ENCODE measurements at regions of chr15 and their contacts with region 1.

Region 1: GRCh38 chr15:96783746-96784145 is 453.2 kb downstream of the NR2F2 start:
- DNase-seq: no peak
- H3K4me3 ChIP-seq: no peak overlapping the region
- H3K27ac ChIP-seq: no peak overlapping the region
- H3K4me1 ChIP-seq: no peaks in the 10 kb centered on the region
- H3K27me3 ChIP-seq: no peaks in the 10 kb centered on the region
- CTCF ChIP-seq: no peak

Region 2: GRCh38 chr15:95439922-95440376 is 1343.8 kb before region 1 on chr15:
- CTCF ChIA-PET with region 1: interaction called, 10 read pairs
- POLR2A ChIA-PET with region 1: no interaction called
- intact Hi-C with region 1: no loop called
- DNase-seq: no peak
- H3K4me3 ChIP-seq: no peak overlapping the region
- H3K27ac ChIP-seq: no peak overlapping the region
- H3K4me1 ChIP-seq: peaks cover 8% of the 10 kb centered on the region
- H3K27me3 ChIP-seq: no peaks in the 10 kb centered on the region
- CTCF ChIP-seq: no peak

Region 3: DNA sequence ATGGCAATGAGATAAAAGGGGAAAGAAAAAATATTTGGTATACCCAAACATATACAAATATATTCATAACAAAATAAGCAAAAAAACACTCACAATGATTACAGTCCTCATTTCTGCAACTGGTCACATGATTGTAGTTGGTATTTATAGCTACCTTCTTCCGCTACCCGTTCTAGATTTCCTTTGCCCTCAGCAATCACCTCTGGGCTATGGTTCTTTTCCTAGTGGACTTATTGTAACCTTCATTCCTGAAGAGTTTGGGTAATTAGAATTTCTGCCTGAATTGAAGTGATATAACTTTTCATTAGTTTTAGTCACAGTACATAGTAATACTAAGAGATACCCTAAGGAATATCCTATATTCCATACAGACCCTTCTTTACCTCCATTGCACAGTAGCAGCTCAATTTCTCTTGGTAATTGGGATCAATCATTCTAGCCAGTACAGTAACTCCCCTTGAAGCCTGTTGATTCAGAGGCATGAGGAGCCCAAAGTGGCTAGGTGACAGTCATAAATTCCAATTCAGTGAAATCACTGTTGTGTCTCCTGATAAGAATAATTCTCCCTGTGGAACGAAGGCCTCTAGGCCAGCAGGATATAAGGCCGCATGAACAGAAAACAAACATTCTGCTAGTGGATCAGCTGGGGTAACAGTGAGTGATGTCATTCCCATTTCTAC is 242.8 kb after region 1 on chr15:
- CTCF ChIA-PET with region 1: no interaction called
- POLR2A ChIA-PET with region 1: no interaction called
- intact Hi-C with region 1: no loop called
- DNase-seq: no peak
- H3K4me3 ChIP-seq: no peak overlapping the region
- H3K27ac ChIP-seq: no peak overlapping the region
- H3K4me1 ChIP-seq: peaks cover 11% of the 10 kb centered on the region
- H3K27me3 ChIP-seq: no peaks in the 10 kb centered on the region
- CTCF ChIP-seq: no peak